HepG2 (cell line): ENCODE measurements at regions of chr9 and their contacts with region 1.

Region 1: GRCh38 chr9:107548048-107548800 is 58.7 kb upstream of the KLF4 start:
- DNase-seq: peak; percentile 29
- ATAC-seq: no peak
- H3K4me3 ChIP-seq: no peak overlapping the region
- H3K27ac ChIP-seq: no peak overlapping the region
- H3K4me1 ChIP-seq: peaks cover 40% of the 10 kb centered on the region
- H3K27me3 ChIP-seq: peaks cover 0 to 15% of the 10 kb centered on the region in 2 experiments; a peak in 1 of 5 replicates
- CTCF ChIP-seq: no peak
- EP300 ChIP-seq: peak in 1 of 2 experiments; percentile 45; a peak in 1 of 4 replicates
- POLR2A ChIP-seq: no peak
- RAD21 ChIP-seq: no peak

Region 2: GRCh38 chr9:107409581-107410387 is 138.4 kb before region 1 on chr9:
- CTCF ChIA-PET with region 1: no interaction called
- POLR2A ChIA-PET with region 1: no interaction called
- in situ Hi-C with region 1: no loop called
- intact Hi-C with region 1: no loop called
- DNase-seq: no peak
- ATAC-seq: no peak
- H3K4me3 ChIP-seq: no peak overlapping the region
- H3K27ac ChIP-seq: no peak overlapping the region
- H3K4me1 ChIP-seq: no peaks in the 10 kb centered on the region
- H3K27me3 ChIP-seq: no peaks in the 10 kb centered on the region; a peak in 1 of 5 replicates
- CTCF ChIP-seq: no peak
- EP300 ChIP-seq: no peak
- POLR2A ChIP-seq: no peak
- RAD21 ChIP-seq: no peak

Region 3: GRCh38 chr9:107504569-107505377 is 43.5 kb before region 1 on chr9:
- CTCF ChIA-PET with region 1: no interaction called
- POLR2A ChIA-PET with region 1: no interaction called
- in situ Hi-C with region 1: no loop called
- intact Hi-C with region 1: loop called (anchors 2 kb)
- DNase-seq: peak; percentile 90
- ATAC-seq: peak; percentile 95
- H3K4me3 ChIP-seq: no peak overlapping the region
- H3K27ac ChIP-seq: no peak overlapping the region
- H3K4me1 ChIP-seq: peaks cover 15% of the 10 kb centered on the region
- H3K27me3 ChIP-seq: no peaks in the 10 kb centered on the region
- CTCF ChIP-seq: no peak
- EP300 ChIP-seq: peak in 1 of 2 experiments; percentile 69; a peak in 2 of 4 replicates
- POLR2A ChIP-seq: no peak
- RAD21 ChIP-seq: no peak

Region 4: GRCh38 chr9:107559494-107560086 is 11.4 kb after region 1 on chr9:
- CTCF ChIA-PET with region 1: no interaction called
- POLR2A ChIA-PET with region 1: no interaction called
- in situ Hi-C with region 1: no loop called
- intact Hi-C with region 1: no loop called
- DNase-seq: no peak
- ATAC-seq: no peak
- H3K4me3 ChIP-seq: no peak overlapping the region
- H3K27ac ChIP-seq: no peak overlapping the region
- H3K4me1 ChIP-seq: 0 out of 2 replicates have a peak, but pooled peaks cover 6% of the 10 kb centered on the region
- H3K27me3 ChIP-seq: peaks cover 0 to 10% of the 10 kb centered on the region in 2 experiments; a peak in 1 of 5 replicates
- CTCF ChIP-seq: no peak
- EP300 ChIP-seq: no peak
- POLR2A ChIP-seq: no peak
- RAD21 ChIP-seq: no peak

Region 5: DNA sequence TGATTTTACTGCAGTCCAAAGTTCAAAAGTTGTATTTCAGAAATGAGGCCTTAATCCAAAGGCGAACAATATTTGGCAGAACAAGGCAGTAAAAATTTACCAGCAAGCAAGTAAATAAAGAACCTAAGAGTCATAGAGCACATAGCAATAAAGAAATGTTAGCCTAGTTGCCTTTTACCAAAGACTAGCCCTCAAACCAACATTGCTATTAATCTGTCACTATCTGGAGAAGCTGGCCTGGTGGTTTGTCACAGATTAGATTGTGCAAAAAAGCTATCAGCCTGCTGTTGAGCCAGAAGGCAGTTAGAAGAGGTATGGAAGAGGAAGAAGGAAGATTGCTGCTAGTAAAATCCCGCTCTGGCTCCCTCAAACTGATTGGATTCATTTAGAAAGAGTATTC is 246.0 kb after region 1 on chr9:
- CTCF ChIA-PET with region 1: no interaction called
- POLR2A ChIA-PET with region 1: no interaction called
- in situ Hi-C with region 1: no loop called
- intact Hi-C with region 1: no loop called
- DNase-seq: no peak
- ATAC-seq: no peak
- H3K4me3 ChIP-seq: no peak overlapping the region
- H3K27ac ChIP-seq: no peak overlapping the region
- H3K4me1 ChIP-seq: no peaks in the 10 kb centered on the region
- H3K27me3 ChIP-seq: no peaks in the 10 kb centered on the region
- CTCF ChIP-seq: no peak
- EP300 ChIP-seq: no peak
- POLR2A ChIP-seq: no peak
- RAD21 ChIP-seq: no peak